GM12878 (cell line): ENCODE measurements at regions of chr22 and their contacts with region 1.

Region 1: DNA sequence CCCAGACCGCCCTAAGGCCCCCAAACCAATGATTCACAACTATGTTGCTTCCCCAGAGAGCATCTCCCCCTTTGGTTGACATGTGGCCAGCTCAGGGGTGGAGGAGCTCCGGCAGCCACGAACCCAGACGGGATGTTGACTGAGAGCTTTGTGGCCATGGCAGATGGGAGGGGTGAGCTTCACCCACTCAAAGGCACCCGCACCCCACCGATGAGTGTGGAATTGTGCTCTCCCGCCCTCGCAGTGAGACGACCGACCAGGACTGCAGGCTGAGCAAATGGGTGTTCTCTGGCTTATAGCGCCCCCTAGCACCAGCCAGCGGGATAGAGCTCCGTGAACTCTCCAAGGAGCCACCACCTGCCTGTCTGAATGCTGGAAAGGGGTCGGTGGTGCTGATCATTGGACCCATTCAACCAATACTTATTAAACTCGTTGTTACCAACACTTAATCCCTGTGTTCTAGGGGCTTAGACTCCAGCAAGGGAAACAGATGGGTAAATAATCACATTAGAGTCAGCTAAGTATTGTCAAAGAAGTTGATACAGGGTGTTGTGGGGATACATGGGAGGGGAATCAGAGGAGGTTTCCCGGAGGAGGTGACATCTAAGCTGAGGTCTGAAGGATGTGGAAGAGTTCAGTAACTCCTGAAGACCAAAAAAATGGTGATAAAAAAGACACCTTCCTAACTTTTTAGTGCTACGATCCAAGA is 4.5 kb upstream of the TIMP3 start:
- DNase-seq: no peak
- ATAC-seq: peak; percentile 88
- H3K4me3 ChIP-seq: no peak overlapping the region
- H3K27ac ChIP-seq: no peak overlapping the region
- H3K4me1 ChIP-seq: no peaks in the 10 kb centered on the region
- H3K27me3 ChIP-seq: peaks cover 4% of the 10 kb centered on the region in 2 experiments; a peak in 3 of 4 replicates
- CTCF ChIP-seq: peak; percentile 75 to 84 (median 82)
- EP300 ChIP-seq: no peak
- POLR2A ChIP-seq: no peak
- RAD21 ChIP-seq: peak; percentile 73

Region 2: GRCh38 chr22:32528984-32529982 is 267.7 kb before region 1 on chr22:
- CTCF ChIA-PET with region 1: interaction called, 108 read pairs
- POLR2A ChIA-PET with region 1: no interaction called
- RAD21 ChIA-PET with region 1: interaction called, 55 read pairs
- SMC1A ChIA-PET with region 1: interaction called, 24 read pairs
- in situ Hi-C with region 1: loop called (anchors 5 kb)
- intact Hi-C with region 1: loop called (anchors 1 kb)
- DNase-seq: peak; percentile 9
- ATAC-seq: peak; percentile 96
- H3K4me3 ChIP-seq: no peak overlapping the region
- H3K27ac ChIP-seq: no peak overlapping the region
- H3K4me1 ChIP-seq: no peaks in the 10 kb centered on the region
- H3K27me3 ChIP-seq: peaks cover 0 to 2% of the 10 kb centered on the region in 2 experiments; a peak in 1 of 4 replicates
- CTCF ChIP-seq: peak; percentile 65 to 84 (median 77)
- EP300 ChIP-seq: no peak
- POLR2A ChIP-seq: no peak
- RAD21 ChIP-seq: peak; percentile 70

Region 3: GRCh38 chr22:32660292-32660691 is 136.7 kb before region 1 on chr22:
- CTCF ChIA-PET with region 1: interaction called, 52 read pairs
- POLR2A ChIA-PET with region 1: no interaction called
- RAD21 ChIA-PET with region 1: interaction called, 28 read pairs
- SMC1A ChIA-PET with region 1: interaction called, 28 read pairs
- in situ Hi-C with region 1: loop called (anchors 5 kb)
- intact Hi-C with region 1: loop called (anchors 2 kb)
- DNase-seq: no peak
- ATAC-seq: peak; percentile 78
- H3K4me3 ChIP-seq: no peak overlapping the region
- H3K27ac ChIP-seq: no peak overlapping the region
- H3K4me1 ChIP-seq: no peaks in the 10 kb centered on the region
- H3K27me3 ChIP-seq: no peaks in the 10 kb centered on the region; a peak in 1 of 4 replicates
- CTCF ChIP-seq: peak; percentile 73 to 78 (median 76)
- EP300 ChIP-seq: no peak
- POLR2A ChIP-seq: no peak
- RAD21 ChIP-seq: peak; percentile 68

Region 4: DNA sequence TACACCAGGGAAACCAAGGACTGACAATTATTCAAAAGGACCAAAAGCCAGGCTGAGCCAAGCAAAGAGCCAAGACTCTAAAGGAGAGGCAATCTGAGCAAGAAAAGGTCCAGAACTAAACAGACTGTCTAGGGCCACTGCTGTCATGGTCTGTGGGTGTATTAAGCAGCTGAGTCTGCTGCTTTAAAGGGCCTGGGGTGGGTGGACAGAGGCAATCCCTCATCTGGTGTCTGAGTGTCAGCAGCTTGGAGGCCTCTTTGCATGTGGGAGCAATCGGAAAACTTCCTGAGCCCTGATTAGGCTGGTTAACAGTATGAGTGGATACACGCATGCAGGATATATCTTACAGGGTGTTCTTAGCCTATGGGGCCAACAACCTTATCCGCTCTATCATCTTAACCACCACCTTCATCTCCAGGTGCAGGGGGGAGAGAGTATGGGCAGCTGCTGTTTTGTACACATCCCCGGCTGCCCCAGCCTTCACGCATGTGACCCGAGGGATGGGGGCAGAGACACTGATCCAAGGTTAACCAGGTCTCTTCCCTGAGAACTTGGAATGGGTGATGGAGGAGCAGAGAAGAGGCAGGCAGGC is 63.0 kb before region 1 on chr22:
- CTCF ChIA-PET with region 1: no interaction called
- POLR2A ChIA-PET with region 1: no interaction called
- RAD21 ChIA-PET with region 1: no interaction called
- SMC1A ChIA-PET with region 1: no interaction called
- in situ Hi-C with region 1: loop called (anchors 5 kb)
- intact Hi-C with region 1: no loop called
- DNase-seq: no peak
- ATAC-seq: no peak
- H3K4me3 ChIP-seq: no peak overlapping the region
- H3K27ac ChIP-seq: no peak overlapping the region
- H3K4me1 ChIP-seq: no peaks in the 10 kb centered on the region
- H3K27me3 ChIP-seq: no peaks in the 10 kb centered on the region; a peak in 1 of 4 replicates
- CTCF ChIP-seq: no peak
- EP300 ChIP-seq: no peak
- POLR2A ChIP-seq: no peak
- RAD21 ChIP-seq: no peak

Region 5: GRCh38 chr22:32754413-32755041 is 42.5 kb before region 1 on chr22:
- CTCF ChIA-PET with region 1: no interaction called
- POLR2A ChIA-PET with region 1: no interaction called
- RAD21 ChIA-PET with region 1: no interaction called
- SMC1A ChIA-PET with region 1: no interaction called
- in situ Hi-C with region 1: no loop called
- intact Hi-C with region 1: no loop called
- DNase-seq: no peak
- ATAC-seq: no peak
- H3K4me3 ChIP-seq: no peak overlapping the region
- H3K27ac ChIP-seq: no peak overlapping the region
- H3K4me1 ChIP-seq: no peaks in the 10 kb centered on the region
- H3K27me3 ChIP-seq: no peaks in the 10 kb centered on the region; a peak in 1 of 4 replicates
- CTCF ChIP-seq: no peak
- EP300 ChIP-seq: no peak
- POLR2A ChIP-seq: no peak
- RAD21 ChIP-seq: no peak

Region 6: DNA sequence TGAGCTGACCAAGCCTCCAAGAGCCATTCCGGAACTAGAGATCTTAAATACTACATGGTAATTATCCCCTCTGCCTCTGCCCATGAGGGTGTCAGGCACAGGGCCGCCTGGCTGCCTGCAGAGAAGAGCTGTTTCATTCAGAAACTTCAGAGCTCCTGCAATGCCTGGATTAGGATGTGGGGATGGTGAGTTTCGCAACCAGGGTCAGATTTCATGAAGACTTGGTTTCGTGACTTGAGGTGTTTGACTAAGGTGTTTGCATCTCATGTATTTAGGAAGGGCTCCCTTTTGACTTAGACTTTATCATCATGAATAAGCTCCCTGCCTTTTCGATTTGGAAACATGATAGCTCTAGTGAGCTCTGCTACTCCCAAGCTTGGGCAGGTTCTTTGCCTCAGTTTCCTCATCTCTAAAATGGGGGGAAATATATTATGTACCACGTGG is 13.6 kb after region 1 on chr22:
- CTCF ChIA-PET with region 1: interaction called, 20 read pairs
- POLR2A ChIA-PET with region 1: no interaction called
- RAD21 ChIA-PET with region 1: no interaction called
- SMC1A ChIA-PET with region 1: interaction called, 4 read pairs
- in situ Hi-C with region 1: no loop called
- intact Hi-C with region 1: no loop called
- DNase-seq: no peak
- ATAC-seq: no peak
- H3K4me3 ChIP-seq: no peak overlapping the region
- H3K27ac ChIP-seq: no peak overlapping the region
- H3K4me1 ChIP-seq: no peaks in the 10 kb centered on the region
- H3K27me3 ChIP-seq: peaks cover 0 to 2% of the 10 kb centered on the region in 2 experiments; a peak in 1 of 4 replicates
- CTCF ChIP-seq: no peak
- EP300 ChIP-seq: no peak
- POLR2A ChIP-seq: no peak
- RAD21 ChIP-seq: no peak

Region 7: DNA sequence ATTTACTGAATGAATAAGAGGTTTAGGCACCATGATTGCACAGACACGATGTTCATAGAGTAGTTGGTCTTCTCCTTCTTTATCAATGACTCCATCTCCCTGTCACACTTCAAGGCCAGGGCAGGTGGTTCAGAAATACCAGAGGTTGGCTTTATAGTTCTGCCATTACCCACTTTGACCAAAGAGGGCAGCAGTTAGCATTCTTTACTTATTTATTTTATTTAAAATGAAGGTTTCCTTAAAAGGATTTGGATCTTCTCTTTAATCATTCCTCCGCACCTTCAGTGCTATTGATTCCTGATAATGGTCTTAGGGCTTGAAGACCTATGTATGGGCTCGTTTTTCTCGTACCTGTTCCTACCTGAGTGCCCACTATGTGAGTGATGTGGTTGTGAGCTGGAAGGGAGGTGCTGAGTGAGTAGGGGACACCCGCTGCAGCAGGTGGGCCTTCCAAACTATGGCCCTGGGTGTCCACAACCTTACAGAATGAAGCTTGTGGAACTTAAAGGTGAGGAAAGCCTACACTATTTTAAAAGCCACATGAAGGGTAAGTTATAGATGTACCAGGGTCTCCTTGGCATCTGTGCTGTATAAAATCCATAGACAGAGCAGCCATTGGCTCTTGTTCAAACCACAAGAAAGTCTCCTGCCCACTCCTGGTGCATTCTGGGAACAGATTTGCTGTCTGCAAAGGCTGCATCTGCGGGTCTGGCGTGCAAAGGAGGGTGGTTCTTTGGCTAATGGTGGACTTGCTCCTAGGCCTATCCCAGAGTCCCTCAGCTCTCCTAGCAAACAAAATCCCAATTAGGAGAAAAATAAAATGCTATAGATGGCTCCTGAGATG is 39.5 kb after region 1 on chr22:
- CTCF ChIA-PET with region 1: interaction called, 4 read pairs
- POLR2A ChIA-PET with region 1: no interaction called
- RAD21 ChIA-PET with region 1: no interaction called
- SMC1A ChIA-PET with region 1: no interaction called
- in situ Hi-C with region 1: loop called (anchors 5 kb)
- intact Hi-C with region 1: no loop called
- DNase-seq: no peak
- ATAC-seq: no peak; the same call in 2 of the 3 replicates
- H3K4me3 ChIP-seq: no peak overlapping the region
- H3K27ac ChIP-seq: no peak overlapping the region
- H3K4me1 ChIP-seq: no peaks in the 10 kb centered on the region
- H3K27me3 ChIP-seq: peaks cover 0 to 2% of the 10 kb centered on the region in 2 experiments; a peak in 2 of 4 replicates
- CTCF ChIP-seq: peak; percentile 33 to 49 (median 34); a peak in 5 of 6 replicates
- EP300 ChIP-seq: no peak
- POLR2A ChIP-seq: no peak
- RAD21 ChIP-seq: no peak

Region 8: DNA sequence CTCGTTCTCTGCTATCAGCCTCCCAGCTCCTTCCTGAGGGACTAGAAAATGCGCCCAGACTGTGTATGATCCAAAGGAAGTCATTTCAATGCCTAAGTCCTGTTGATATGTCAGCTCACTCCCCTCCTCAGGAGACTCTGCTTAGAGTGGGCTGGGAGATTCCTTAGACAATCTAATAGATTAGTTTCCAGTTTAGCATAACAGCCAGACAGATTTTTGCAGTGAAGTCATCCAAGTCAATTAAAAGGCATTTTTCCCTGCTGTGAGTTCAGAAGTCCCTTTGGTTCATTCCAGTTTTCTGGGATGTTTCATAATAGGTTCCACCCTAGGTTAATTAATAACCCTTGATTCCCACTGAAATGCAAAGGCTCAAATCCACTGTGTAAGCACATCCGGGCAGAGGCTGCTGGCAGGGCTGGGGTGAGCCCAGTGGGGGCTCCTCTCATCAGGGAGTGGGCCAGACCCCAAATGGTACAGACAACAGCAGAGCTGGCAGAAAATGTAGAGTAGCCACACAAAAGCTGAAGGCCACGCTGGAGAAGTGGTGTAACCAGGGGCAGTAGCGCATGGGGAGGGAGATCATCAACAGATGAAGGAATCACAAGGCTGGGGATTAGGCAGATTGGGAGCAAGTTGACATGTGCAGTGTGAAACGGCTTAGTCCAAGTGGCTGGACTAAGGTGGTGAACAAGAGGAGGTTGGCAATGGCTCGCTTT is 170.5 kb after region 1 on chr22:
- CTCF ChIA-PET with region 1: no interaction called
- POLR2A ChIA-PET with region 1: no interaction called
- RAD21 ChIA-PET with region 1: no interaction called
- SMC1A ChIA-PET with region 1: no interaction called
- in situ Hi-C with region 1: no loop called
- intact Hi-C with region 1: no loop called
- DNase-seq: no peak
- ATAC-seq: no peak
- H3K4me3 ChIP-seq: no peak overlapping the region
- H3K27ac ChIP-seq: no peak overlapping the region
- H3K4me1 ChIP-seq: no peaks in the 10 kb centered on the region
- H3K27me3 ChIP-seq: no peaks in the 10 kb centered on the region
- CTCF ChIP-seq: no peak
- EP300 ChIP-seq: no peak
- POLR2A ChIP-seq: no peak
- RAD21 ChIP-seq: no peak